Heart left ventricle (tissue), 16 donors: ENCODE measurements at regions of chr9 and their contacts with region 1.

Region 1: GRCh38 chr9:15104826-15105420 is 194.7 kb upstream of the FREM1 start:
- DNase-seq: peak in 1 of 5 donors; percentile 20
- ATAC-seq: peak in 2 of 4 donors; percentile 42 to 64
- H3K4me3 ChIP-seq: no peak overlapping the region
- H3K27ac ChIP-seq: no peak overlapping the region
- H3K4me1 ChIP-seq: no peaks in the 10 kb centered on the region
- H3K27me3 ChIP-seq: no peaks in the 10 kb centered on the region
- CTCF ChIP-seq: peak; percentile 53 to 77 (median 66)
- POLR2A ChIP-seq: no peak

Region 2: GRCh38 chr9:15010581-15010980 is 94.3 kb before region 1 on chr9:
- intact Hi-C with region 1: no loop called
- DNase-seq: no peak
- ATAC-seq: no peak
- H3K4me3 ChIP-seq: no peak overlapping the region
- H3K27ac ChIP-seq: peak overlapping the region in 2 of 12 donors; percentile 3 to 36
- H3K4me1 ChIP-seq: peaks cover 0 to 7% (median 0%) of the 10 kb centered on the region in 12 donors
- H3K27me3 ChIP-seq: no peaks in the 10 kb centered on the region
- CTCF ChIP-seq: no peak
- POLR2A ChIP-seq: no peak

Region 3: GRCh38 chr9:15135164-15135792 is 30.4 kb after region 1 on chr9:
- intact Hi-C with region 1: loop called in 8 of 10 experiments (anchors 2 to 5 kb)
- DNase-seq: peak in 4 of 5 donors; percentile 38 to 48 (median 44)
- ATAC-seq: peak; percentile 63 to 92 (median 84)
- H3K4me3 ChIP-seq: peak overlapping the region in 4 of 12 donors; percentile 12 to 23 (median 22)
- H3K27ac ChIP-seq: no peak overlapping the region
- H3K4me1 ChIP-seq: peaks cover 0 to 8% (median 0%) of the 10 kb centered on the region in 12 donors
- H3K27me3 ChIP-seq: no peaks in the 10 kb centered on the region
- CTCF ChIP-seq: peak; percentile 75 to 96 (median 88)
- POLR2A ChIP-seq: no peak

Region 4: GRCh38 chr9:15142878-15143534 is 38.1 kb after region 1 on chr9:
- intact Hi-C with region 1: loop called in 2 of 10 experiments (anchors 2 to 5 kb)
- DNase-seq: no peak
- ATAC-seq: peak in 3 of 4 donors; percentile 49 to 76 (median 75)
- H3K4me3 ChIP-seq: no peak overlapping the region
- H3K27ac ChIP-seq: no peak overlapping the region
- H3K4me1 ChIP-seq: peaks cover 0 to 4% (median 0%) of the 10 kb centered on the region in 12 donors
- H3K27me3 ChIP-seq: no peaks in the 10 kb centered on the region
- CTCF ChIP-seq: peak; percentile 44 to 84 (median 76)
- POLR2A ChIP-seq: no peak